ENCODE measurements at regions of chr15 and their contacts with region 1.

Region 1: DNA sequence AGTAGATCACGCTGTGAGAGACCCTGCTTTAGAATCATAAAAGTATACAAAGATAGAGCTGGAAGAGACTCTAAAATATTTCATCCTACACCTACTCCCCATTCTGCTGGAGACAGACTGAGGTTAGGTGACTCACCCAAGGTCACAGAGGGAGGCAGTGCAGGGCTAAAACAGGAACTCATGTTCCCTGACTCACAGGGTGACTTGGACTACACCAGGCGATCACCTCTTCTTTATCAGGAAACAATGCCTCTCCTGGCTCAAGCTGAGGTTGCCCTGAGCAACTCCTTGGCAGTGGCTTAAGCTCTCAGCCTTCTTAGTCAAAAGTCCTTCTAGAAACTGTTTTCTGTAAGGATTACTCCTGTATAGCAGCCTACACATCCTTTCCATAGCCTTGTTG is 26.4 kb upstream of the TNFAIP8L3 start:
- DNase-seq: peak; percentile 86
- ATAC-seq: peak; percentile 99
- H3K4me3 ChIP-seq: no peak overlapping the region
- H3K27ac ChIP-seq: no peak overlapping the region
- H3K4me1 ChIP-seq: no peaks in the 10 kb centered on the region; the same call in 1 of the 2 replicates
- H3K27me3 ChIP-seq: no peaks in the 10 kb centered on the region
- CTCF ChIP-seq: no peak

Region 2: DNA sequence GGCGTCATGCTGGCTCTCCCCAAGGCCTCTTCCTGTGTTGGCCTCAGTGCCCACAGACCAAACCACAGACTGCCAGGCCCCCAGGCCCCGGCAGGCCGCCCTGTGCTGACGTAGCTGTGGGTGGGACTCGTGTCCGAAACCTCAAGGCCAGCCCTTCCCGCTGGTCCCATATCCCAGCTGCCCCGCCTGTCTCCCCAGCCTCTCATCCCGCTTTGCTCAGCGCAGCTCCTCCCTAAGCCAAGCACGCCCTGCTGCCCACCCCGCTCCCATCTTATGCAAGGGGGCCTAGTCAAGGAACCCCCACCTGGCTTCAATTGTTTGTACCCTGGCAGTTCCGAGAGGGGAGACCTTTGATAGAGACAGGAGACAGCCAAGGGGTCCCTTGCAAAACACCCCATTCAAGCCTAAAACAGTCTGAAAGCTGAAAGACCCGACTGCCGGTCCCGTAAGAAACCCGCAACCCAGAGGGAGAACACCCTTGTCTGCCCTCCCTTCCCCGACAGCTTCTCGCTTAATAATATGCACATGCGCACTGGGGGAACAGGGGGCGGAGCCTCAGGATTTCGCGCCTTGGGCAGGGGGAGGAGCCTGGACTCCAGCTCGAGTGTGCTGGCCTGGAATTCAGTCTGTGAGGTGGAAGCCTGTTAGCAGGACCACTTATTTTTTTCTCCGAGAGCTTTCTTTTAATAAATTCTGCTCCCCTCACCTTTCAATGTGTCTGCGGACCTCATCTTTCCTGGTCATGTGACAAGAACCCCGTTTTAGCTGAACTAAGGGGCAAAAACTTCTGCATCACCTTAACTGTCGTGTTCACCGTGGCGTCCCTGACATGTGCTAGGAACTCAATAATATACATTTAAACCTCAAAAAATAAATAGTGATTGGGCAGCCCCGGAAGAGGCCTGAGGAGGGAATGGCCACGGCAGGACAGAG is 43.6 kb before region 1 on chr15:
- CTCF ChIA-PET with region 1: no interaction called
- POLR2A ChIA-PET with region 1: interaction called, 16 read pairs
- in situ Hi-C with region 1: no loop called
- intact Hi-C with region 1: no loop called
- DNase-seq: no peak
- ATAC-seq: no peak
- H3K4me3 ChIP-seq: no peak overlapping the region
- H3K27ac ChIP-seq: no peak overlapping the region
- H3K4me1 ChIP-seq: no peaks in the 10 kb centered on the region
- H3K27me3 ChIP-seq: no peaks in the 10 kb centered on the region
- CTCF ChIP-seq: no peak

Region 3: GRCh38 chr15:51414257-51415044 is 293.3 kb after region 1 on chr15:
- CTCF ChIA-PET with region 1: no interaction called
- POLR2A ChIA-PET with region 1: no interaction called
- in situ Hi-C with region 1: no loop called
- intact Hi-C with region 1: no loop called
- DNase-seq: no peak
- ATAC-seq: no peak
- H3K4me3 ChIP-seq: no peak overlapping the region
- H3K27ac ChIP-seq: no peak overlapping the region
- H3K4me1 ChIP-seq: no peaks in the 10 kb centered on the region
- H3K27me3 ChIP-seq: no peaks in the 10 kb centered on the region
- CTCF ChIP-seq: no peak

Measured in Panc1 (cell line).